ENCODE measurements at regions of chr9 and their contacts with region 1.

Region 1: DNA sequence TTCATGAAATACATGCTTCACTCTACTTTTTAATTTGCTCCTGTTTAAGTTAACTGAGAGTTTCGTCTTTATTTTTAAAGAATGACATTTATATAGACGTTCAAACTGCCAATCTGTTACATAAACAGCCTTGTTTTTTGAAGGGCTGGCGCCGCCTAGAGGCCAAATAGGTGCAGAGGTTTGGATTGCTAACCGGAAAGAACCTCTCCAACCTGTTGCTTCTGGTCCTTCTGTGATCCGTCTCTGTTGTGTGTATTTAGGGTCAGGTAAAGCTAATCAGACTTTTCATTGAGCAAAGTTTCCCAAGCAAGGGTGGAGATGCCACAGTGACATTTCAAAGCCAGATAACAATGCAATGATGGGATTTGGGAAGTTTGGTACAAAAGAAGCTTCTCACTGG is 39.5 kb upstream of the GLIS3 start:
- DNase-seq: peak; percentile 90
- H3K4me3 Mint-ChIP-seq: no peak overlapping the region
- H3K27ac Mint-ChIP-seq: no peak overlapping the region
- H3K4me1 Mint-ChIP-seq: peaks cover 10% of the 10 kb centered on the region
- H3K27me3 Mint-ChIP-seq: no peaks in the 10 kb centered on the region
- CTCF ChIP-seq: peak; percentile 92

Region 2: GRCh38 chr9:4228606-4229005 is 110.8 kb before region 1 on chr9:
- CTCF ChIA-PET with region 1: interaction called, 24 read pairs
- POLR2A ChIA-PET with region 1: no interaction called
- intact Hi-C with region 1: loop called (anchors 2 kb)
- DNase-seq: peak; percentile 48
- H3K4me3 Mint-ChIP-seq: no peak overlapping the region
- H3K27ac Mint-ChIP-seq: peak overlapping the region; percentile 76
- H3K4me1 Mint-ChIP-seq: no peaks in the 10 kb centered on the region
- H3K27me3 Mint-ChIP-seq: no peaks in the 10 kb centered on the region
- CTCF ChIP-seq: peak; percentile 62

Region 3: DNA sequence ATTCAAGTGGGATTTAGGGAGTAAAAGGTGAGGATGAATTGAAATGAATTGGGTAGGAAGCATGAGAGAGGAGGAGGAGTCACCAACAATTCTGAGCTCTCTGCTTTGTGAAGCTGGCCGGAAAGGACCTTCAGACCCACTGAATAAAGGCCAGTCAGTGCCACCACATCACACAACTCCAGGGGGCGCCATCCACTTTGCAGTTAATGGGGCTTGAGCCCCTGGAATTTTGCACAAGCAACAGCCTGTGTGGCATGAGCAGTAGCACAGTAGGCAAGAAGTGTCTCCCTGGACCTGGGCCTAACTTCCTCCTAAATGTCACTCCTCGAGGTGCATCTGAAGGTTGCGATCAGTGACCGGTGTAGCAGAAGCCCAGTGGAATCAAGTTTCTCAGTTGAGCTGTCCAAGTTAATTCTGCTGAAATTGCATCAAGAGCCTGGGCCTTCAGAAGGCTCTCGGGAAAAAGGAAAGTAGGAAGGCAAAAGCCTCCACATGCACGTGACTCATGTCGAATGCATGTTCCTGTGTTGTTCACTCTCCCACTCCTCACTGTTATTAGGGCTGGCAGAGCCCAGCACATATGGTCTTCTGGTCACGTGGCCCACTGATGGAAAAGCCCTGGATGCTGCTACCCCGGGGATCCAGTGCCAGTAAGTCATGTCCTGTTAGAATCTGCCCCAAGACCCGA is 11.7 kb before region 1 on chr9:
- CTCF ChIA-PET with region 1: interaction called, 32 read pairs
- POLR2A ChIA-PET with region 1: interaction called, 4 read pairs
- intact Hi-C with region 1: no loop called
- DNase-seq: peak; percentile 33
- H3K4me3 Mint-ChIP-seq: no peak overlapping the region
- H3K27ac Mint-ChIP-seq: no peak overlapping the region
- H3K4me1 Mint-ChIP-seq: no peaks in the 10 kb centered on the region
- H3K27me3 Mint-ChIP-seq: no peaks in the 10 kb centered on the region
- CTCF ChIP-seq: no peak

Region 4: GRCh38 chr9:4375424-4376200 is 36.3 kb after region 1 on chr9:
- CTCF ChIA-PET with region 1: interaction called, 10 read pairs
- POLR2A ChIA-PET with region 1: no interaction called
- intact Hi-C with region 1: no loop called
- DNase-seq: peak; percentile 50
- H3K4me3 Mint-ChIP-seq: no peak overlapping the region
- H3K27ac Mint-ChIP-seq: no peak overlapping the region
- H3K4me1 Mint-ChIP-seq: peaks cover 11% of the 10 kb centered on the region
- H3K27me3 Mint-ChIP-seq: peaks cover 24% of the 10 kb centered on the region
- CTCF ChIP-seq: peak; percentile 54

Region 5: DNA sequence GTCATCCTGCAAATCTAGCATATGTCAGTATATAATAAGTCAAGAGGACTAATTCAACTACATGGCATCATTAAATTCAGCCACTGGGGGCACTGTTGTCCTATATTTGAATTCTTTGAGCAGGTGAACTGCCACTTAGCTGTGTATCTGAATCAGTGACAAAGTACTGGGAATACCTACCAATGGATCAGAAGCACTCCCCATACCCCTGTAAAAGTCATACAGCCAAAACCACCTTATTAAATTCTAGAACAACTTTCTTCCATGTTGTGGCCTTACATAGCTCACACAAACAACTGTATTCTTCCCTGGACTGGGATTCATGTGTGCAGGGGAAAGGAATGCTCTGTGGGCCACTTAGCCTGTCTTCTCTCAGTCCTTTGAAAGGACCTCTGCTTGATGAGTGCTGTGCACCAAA is 265.3 kb after region 1 on chr9:
- CTCF ChIA-PET with region 1: no interaction called
- POLR2A ChIA-PET with region 1: no interaction called
- intact Hi-C with region 1: no loop called
- DNase-seq: peak; percentile 82
- H3K4me3 Mint-ChIP-seq: no peak overlapping the region
- H3K27ac Mint-ChIP-seq: no peak overlapping the region
- H3K4me1 Mint-ChIP-seq: no peaks in the 10 kb centered on the region
- H3K27me3 Mint-ChIP-seq: no peaks in the 10 kb centered on the region
- CTCF ChIP-seq: peak; percentile 61